A549 (cell line): ENCODE measurements at regions of chr9 and their contacts with region 1.

Region 1: DNA sequence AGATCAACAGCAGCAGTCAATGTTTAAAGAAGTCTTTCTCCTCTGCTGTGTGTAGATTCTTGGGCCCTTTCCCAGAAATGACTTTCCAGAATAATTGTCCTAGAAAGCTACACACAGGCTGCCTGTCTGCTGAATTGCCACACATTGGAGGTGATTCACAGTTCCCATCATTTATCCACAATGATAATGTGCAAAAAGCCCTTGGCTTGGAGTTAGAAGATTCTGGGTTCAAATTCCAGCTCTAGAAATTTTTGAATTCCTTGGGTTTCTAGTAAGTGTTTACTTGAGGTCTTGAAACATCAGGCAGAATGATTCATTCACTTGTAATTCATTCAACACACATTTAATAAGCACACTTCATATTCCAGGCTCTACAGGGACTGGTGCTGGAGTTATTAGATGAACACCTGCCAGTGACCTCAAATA is 28.6 kb upstream of the EPB41L4B start:
- DNase-seq: peak; percentile 13 to 76
- ATAC-seq: peak; percentile 85 to 88
- H3K4me3 ChIP-seq: no peak overlapping the region
- H3K27ac ChIP-seq: peak overlapping the region in 1 of 2 experiments; percentile 69; a peak in 3 of 6 replicates
- H3K4me1 ChIP-seq: peaks cover 25% of the 10 kb centered on the region
- CTCF ChIP-seq: no peak
- EP300 ChIP-seq: peak in 1 of 2 experiments; percentile 24; a peak in 1 of 5 replicates
- POLR2A ChIP-seq: no peak
- RAD21 ChIP-seq: no peak

Region 2: DNA sequence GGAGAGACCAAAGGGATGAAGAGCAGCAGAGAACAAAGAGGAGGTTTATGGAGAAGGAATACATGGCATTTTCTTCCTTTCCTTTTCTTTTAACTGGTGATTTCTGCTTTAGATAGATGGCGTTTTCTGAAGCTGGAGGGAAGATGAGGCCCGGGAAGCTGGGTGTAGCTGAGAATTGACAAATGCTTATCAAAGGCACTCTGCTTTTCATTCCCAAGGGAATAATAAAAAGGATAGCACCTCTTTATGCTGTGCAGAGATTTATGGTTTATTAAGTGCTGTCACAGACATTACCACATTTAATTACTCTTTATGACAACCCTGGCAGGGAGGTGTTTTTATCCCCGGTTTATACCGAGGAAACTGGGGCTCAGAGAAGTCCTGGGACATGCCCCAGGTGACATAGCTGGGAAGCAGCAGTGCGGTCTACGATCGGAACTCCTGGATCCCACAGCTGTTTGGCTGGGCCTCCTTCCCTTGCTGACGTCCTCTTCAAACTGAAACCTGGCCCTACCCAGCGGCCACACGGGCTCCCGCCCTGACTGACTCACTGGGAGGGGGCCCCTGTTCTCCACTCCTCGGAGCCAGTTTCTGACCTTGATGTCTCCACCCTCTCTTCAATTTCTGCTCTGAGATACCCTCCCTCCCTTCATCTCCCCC is 20.3 kb before region 1 on chr9:
- CTCF ChIA-PET with region 1: interaction called, 24 read pairs
- POLR2A ChIA-PET with region 1: interaction called, 12 read pairs
- DNase-seq: peak in 1 of 2 experiments; percentile 28
- ATAC-seq: peak; percentile 52 to 74; a peak in 5 of 6 replicates
- H3K4me3 ChIP-seq: no peak overlapping the region
- H3K27ac ChIP-seq: peak overlapping the region; percentile 78 to 80
- H3K4me1 ChIP-seq: peaks cover 33% of the 10 kb centered on the region
- CTCF ChIP-seq: no peak
- EP300 ChIP-seq: no peak
- POLR2A ChIP-seq: no peak
- RAD21 ChIP-seq: no peak